Posterior cingulate gyrus (tissue), 11 donors: ENCODE measurements at regions of chr7 and their contacts with region 1.

Region 1: DNA sequence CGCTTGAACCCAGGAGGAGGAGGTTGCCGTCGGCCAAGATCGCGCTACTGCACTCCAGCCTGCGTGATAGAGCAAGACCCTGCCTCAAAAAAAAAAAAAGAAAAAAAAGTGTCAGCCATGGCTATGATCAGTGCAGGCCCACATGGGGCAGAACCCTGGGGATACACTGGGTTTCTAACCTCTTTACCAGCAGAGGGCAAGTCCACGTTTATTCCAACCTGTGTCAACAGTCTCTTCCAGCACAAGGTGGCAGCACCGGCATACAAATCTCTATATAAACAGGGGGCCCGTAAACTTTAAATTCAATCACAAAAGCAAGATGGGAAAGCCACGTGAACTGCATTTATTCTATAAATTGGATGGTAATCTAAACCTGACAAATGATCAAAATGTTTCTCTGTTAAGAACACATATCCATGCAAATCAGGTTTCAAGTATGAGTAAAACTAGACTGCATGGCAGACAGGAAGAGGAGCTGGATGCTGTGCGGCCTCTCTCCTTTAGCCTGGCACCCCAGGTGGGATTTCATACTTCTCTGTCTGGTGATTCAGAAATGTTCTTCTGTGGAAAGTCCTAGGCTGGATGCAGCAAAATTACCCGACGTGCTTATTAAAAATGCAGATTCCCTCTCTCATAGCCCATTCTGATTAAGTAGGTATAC is 60.0 kb upstream of the STEAP1B start:
- DNase-seq: peak in 7 of 10 donors; percentile 49 to 92 (median 60)

Region 2: GRCh38 chr7:22499044-22499443 is 60.9 kb before region 1 on chr7:
- intact Hi-C with region 1: no loop called
- DNase-seq: peak in 1 of 10 donors; percentile 17

Region 3: GRCh38 chr7:22726345-22727185 is 166.6 kb after region 1 on chr7:
- intact Hi-C with region 1: loop called (anchors 2 kb)
- DNase-seq: peak in 6 of 10 donors; percentile 13 to 89 (median 36)

Region 4: GRCh38 chr7:22782616-22783232 is 222.8 kb after region 1 on chr7:
- intact Hi-C with region 1: loop called (anchors 5 kb)
- DNase-seq: peak in 5 of 10 donors; percentile 15 to 73 (median 43)

Region 5: DNA sequence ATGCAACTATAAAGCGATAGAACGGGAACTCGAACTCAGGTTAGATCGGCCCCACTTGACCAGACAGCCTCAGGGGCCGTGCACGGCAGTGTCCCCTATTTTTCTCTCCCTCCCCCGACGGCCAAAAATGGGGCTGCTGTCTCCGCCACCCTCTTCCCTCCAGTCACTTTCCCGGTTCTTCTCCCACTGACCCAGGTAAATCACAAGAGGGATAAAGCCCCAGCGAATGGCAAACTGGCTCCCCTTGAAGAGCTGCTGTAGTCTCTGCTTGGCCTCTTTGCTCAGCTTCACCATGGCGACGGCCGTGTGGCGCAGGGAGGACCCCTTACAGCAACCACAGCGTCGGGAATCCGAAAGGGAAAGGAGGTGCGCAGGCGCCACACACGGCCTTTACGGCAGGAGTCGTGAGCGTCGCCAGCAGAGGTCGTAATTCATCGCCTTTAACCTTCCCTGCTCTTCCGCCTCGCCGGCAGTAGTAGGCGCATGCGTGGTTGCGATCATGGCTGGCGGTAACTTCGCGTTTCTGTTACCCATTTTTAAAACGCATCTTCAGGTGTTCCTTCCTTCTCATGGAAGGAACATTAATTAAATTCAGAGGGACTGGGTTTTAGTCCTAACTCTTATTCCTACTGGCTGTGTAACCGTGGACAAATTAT is 262.7 kb after region 1 on chr7 and contains the start of gene TOMM7:
- intact Hi-C with region 1: loop called (anchors 10 kb)
- DNase-seq: peak; percentile 82 to 98 (median 88)

Region 6: DNA sequence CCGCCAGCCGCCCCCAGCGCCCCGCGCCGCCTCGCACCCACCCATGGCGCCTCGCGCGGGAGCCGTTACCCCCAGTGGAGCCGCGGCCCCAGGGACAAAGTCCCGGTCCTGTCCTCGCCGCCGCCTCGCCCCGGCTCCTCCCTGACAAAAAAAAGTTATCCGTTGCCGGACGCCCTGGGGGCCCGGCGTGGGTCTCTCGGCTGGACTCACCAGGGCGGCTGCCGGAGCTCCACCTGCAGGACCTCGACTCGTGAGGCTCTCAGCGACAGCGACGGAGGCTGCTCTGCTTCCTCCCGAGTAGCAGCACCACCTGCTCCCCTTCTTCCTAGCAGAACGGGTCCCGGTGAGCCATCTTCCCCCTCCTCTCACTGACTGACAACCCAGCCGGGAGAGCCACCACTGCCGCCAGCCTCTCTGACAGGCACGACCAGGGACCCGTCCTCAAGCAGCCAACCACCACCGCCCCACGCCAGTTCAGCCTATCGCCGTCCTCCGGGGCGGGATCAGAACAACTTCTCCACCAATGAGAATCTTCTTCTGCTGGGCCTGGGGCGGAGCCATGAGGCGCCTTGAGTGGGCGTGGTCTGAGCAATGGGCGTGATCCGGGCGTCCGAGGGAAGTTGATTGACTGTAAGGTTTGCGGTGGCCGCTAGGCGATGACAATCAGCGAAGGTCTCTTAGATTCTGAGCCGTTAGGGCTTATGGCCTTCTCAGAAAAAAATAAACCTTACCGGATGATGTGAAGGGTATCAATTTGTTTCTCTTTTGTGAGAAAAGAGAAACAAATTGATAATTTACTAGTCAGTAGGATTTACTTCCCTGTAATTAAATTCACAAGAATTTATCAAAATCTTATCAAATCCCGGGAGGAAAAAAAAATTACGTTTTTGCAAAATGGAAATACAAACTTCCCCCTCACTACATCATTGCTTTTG is 454.0 kb after region 1 on chr7 and contains the start of gene HYCC1:
- intact Hi-C with region 1: loop called (anchors 5 kb)
- DNase-seq: peak; percentile 99 to 100 (median 100)

Region 7: GRCh38 chr7:23055582-23056178 is 495.7 kb after region 1 on chr7:
- intact Hi-C with region 1: loop called (anchors 1 kb)
- DNase-seq: peak in 4 of 10 donors; percentile 45 to 59 (median 52)